Transverse colon (tissue), 4 donors: ENCODE measurements at regions of chr22 and their contacts with region 1.

Region 1: GRCh38 chr22:45553351-45554039 is 50.8 kb downstream of the FBLN1 start:
- DNase-seq: peak; percentile 73
- H3K4me3 ChIP-seq: no peak overlapping the region
- H3K27ac ChIP-seq: peak overlapping the region; percentile 72 to 88 (median 76)
- H3K4me1 ChIP-seq: peaks cover 15 to 41% (median 23%) of the 10 kb centered on the region in 4 donors
- H3K27me3 ChIP-seq: no peaks in the 10 kb centered on the region
- CTCF ChIP-seq: peak; percentile 81 to 88 (median 82)
- EP300 ChIP-seq: peak; percentile 37
- POLR2A ChIP-seq: no peak

Region 2: DNA sequence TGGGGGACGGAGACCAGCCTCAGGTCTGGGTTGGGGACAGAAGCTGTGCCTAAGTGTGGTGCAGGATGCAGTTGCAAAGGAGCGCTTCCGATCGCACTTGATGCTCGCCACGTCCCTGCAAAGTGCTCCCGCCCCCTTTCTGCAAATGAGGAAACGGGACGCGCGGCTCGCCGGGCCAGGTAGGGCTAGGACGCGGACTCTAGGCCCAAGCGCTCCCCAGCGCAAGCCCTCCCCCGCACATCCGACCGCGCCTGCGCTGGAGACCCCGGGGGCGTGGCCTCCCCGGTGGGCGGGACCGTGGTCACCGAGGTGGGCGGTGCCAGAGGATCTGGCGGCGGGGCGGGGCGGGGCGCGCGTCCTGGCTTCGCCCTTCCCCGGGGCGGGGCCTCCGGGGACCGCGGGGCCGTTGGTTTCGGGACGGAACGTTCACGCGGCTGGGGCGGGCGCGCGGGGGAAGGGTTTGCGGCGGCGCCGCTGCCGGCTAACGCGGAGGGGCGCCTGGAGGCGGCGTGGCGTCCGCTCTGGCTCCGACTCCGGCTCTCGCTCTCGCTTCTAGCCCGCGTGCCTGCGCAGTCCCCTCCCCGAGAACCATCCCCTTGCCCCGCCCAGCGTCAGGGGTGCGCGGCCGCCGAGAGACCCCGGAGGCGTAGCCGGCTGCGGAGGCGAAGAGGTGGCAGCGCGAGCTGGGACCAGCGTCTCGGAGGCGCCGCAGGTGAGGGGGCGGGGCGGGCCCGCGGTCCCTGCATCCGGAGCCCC is 243.8 kb before region 1 on chr22 and contains the start of gene FAM118A:
- in situ Hi-C with region 1: no loop called
- intact Hi-C with region 1: loop called (anchors 10 kb)
- DNase-seq: peak; percentile 97
- H3K4me3 ChIP-seq: peak within 1 kb of the TSS; percentile 72 to 80 (median 76)
- H3K27ac ChIP-seq: peak within 1 kb of the TSS; percentile 85 to 92 (median 88)
- H3K4me1 ChIP-seq: peaks cover 11 to 41% (median 31%) of the 10 kb centered on the region in 4 donors
- H3K27me3 ChIP-seq: no peaks in the 10 kb centered on the region
- CTCF ChIP-seq: no peak
- EP300 ChIP-seq: no peak
- POLR2A ChIP-seq: peak; percentile 72
- total RNA-seq, gene FAM118A: 46.0 to 424 (median 210) TPM

Region 3: GRCh38 chr22:45441138-45441537 is 112.4 kb before region 1 on chr22:
- in situ Hi-C with region 1: loop called in 3 of 4 experiments (anchors 10 kb)
- intact Hi-C with region 1: loop called (anchors 1 kb)
- DNase-seq: peak; percentile 51
- H3K4me3 ChIP-seq: no peak overlapping the region
- H3K27ac ChIP-seq: peak overlapping the region in 1 of 4 donors; percentile 13
- H3K4me1 ChIP-seq: no peaks in the 10 kb centered on the region
- H3K27me3 ChIP-seq: no peaks in the 10 kb centered on the region
- CTCF ChIP-seq: peak; percentile 42 to 52 (median 46)
- EP300 ChIP-seq: no peak
- POLR2A ChIP-seq: no peak

Region 4: GRCh38 chr22:45499746-45500145 is 53.7 kb before region 1 on chr22:
- in situ Hi-C with region 1: no loop called
- intact Hi-C with region 1: loop called (anchors 5 kb)
- DNase-seq: peak; percentile 30
- H3K4me3 ChIP-seq: no peak overlapping the region
- H3K27ac ChIP-seq: peak overlapping the region in 3 of 4 donors; percentile 9 to 43 (median 33)
- H3K4me1 ChIP-seq: peaks cover 6 to 10% (median 9%) of the 10 kb centered on the region in 4 donors
- H3K27me3 ChIP-seq: peaks cover 33% of the 10 kb centered on the region
- CTCF ChIP-seq: no peak
- EP300 ChIP-seq: no peak
- POLR2A ChIP-seq: no peak

Region 5: GRCh38 chr22:45671768-45672563 is 118.5 kb after region 1 on chr22 and contains the start of gene ATXN10:
- in situ Hi-C with region 1: no loop called
- intact Hi-C with region 1: no loop called
- DNase-seq: peak; percentile 56
- H3K4me3 ChIP-seq: peak within 1 kb of the TSS; percentile 66 to 92 (median 72)
- H3K27ac ChIP-seq: peak within 1 kb of the TSS; percentile 79 to 89 (median 84)
- H3K4me1 ChIP-seq: peaks cover 10 to 24% (median 19%) of the 10 kb centered on the region in 4 donors
- H3K27me3 ChIP-seq: no peaks in the 10 kb centered on the region
- CTCF ChIP-seq: no peak
- EP300 ChIP-seq: no peak
- POLR2A ChIP-seq: peak; percentile 41
- total RNA-seq, gene ATXN10: 27.3 to 88.3 (median 47.8) TPM